AG04449 (cell line): ENCODE measurements at regions of chr3 and their contacts with region 1.

Region 1: DNA sequence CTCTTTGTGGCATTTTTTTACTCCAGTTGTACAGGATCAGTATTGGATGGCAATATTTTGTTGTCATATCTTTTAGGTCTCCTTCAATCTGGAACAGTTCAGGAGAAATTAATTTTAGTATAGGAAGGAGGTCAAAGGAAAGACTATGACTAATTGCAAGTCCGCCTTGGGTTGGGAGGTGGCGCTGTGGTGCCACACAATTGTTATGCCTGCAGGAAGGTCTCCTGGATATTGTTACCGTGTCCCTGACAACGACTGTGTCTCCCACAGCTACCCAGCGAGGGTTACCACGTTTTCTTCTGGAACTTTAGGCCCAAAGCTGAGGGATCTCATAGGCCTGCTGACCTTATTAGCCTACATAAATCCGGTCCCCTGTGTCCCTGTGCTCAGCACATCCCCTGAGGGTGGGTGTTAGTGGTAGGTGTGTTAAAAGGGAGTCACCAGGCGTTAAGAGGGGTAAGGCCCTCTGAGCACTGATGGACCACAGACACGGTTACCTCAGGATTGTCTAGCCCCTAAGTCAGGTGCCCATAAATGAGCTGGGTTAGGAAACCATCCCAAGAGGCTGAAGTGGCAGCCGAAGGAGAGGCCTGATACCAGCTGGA is 31.5 kb downstream of the KCNAB1 start:
- DNase-seq: peak; percentile 23
- H3K4me3 ChIP-seq: no peak overlapping the region
- CTCF ChIP-seq: peak; percentile 85

Region 2: DNA sequence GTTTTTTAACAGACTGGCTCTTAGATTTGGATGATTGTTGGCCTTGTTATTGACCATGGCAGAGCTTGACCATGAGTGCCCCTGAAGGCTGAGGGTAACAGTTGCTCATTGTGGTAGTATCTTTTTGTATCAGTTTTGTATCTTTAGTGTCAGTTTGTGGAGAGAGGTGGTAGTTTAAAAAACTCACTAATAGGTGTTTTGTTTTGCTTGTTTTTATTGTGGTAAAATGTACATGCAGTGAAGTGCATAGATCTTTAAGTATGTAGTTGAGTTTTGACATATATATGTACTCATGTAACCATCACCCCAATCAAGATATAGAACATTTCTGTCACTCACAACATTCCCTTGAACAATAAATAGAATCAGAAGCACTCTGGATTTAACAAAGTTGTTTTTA is 271.6 kb before region 1 on chr3:
- CTCF ChIA-PET with region 1: no interaction called
- POLR2A ChIA-PET with region 1: no interaction called
- DNase-seq: no peak
- H3K4me3 ChIP-seq: no peak overlapping the region
- CTCF ChIP-seq: no peak

Region 3: DNA sequence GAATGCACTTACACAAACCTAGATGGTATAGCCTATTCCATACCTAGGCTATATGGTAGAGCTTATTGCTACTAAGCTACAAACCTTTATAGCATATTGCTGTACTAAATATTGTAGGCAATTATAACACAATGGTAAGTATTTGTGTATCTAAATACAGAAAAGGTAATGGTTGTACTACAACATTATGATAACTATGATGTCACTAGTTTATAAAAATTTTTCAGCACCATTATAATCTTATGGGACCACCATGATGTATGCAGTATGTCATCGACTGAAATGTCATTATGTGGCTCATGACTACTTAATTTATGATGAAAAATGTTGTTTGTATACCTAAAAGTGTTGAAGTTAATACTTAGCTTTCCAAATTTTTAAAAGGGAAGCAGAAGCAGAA is 34.4 kb before region 1 on chr3:
- CTCF ChIA-PET with region 1: no interaction called
- POLR2A ChIA-PET with region 1: no interaction called
- DNase-seq: no peak
- H3K4me3 ChIP-seq: no peak overlapping the region
- CTCF ChIP-seq: no peak

Region 4: GRCh38 chr3:156132313-156132712 is 19.6 kb before region 1 on chr3:
- CTCF ChIA-PET with region 1: interaction called, 10 read pairs
- POLR2A ChIA-PET with region 1: no interaction called
- DNase-seq: no peak
- H3K4me3 ChIP-seq: no peak overlapping the region
- CTCF ChIP-seq: no peak

Region 5: GRCh38 chr3:156396851-156397250 is 244.9 kb after region 1 on chr3:
- CTCF ChIA-PET with region 1: no interaction called
- POLR2A ChIA-PET with region 1: no interaction called
- DNase-seq: peak; percentile 17
- H3K4me3 ChIP-seq: no peak overlapping the region
- CTCF ChIP-seq: no peak

Region 6: GRCh38 chr3:156449712-156450574 is 298.0 kb after region 1 on chr3:
- CTCF ChIA-PET with region 1: interaction called, 63 read pairs
- POLR2A ChIA-PET with region 1: no interaction called
- DNase-seq: no peak
- H3K4me3 ChIP-seq: no peak overlapping the region
- CTCF ChIP-seq: peak; percentile 60

Region 7: DNA sequence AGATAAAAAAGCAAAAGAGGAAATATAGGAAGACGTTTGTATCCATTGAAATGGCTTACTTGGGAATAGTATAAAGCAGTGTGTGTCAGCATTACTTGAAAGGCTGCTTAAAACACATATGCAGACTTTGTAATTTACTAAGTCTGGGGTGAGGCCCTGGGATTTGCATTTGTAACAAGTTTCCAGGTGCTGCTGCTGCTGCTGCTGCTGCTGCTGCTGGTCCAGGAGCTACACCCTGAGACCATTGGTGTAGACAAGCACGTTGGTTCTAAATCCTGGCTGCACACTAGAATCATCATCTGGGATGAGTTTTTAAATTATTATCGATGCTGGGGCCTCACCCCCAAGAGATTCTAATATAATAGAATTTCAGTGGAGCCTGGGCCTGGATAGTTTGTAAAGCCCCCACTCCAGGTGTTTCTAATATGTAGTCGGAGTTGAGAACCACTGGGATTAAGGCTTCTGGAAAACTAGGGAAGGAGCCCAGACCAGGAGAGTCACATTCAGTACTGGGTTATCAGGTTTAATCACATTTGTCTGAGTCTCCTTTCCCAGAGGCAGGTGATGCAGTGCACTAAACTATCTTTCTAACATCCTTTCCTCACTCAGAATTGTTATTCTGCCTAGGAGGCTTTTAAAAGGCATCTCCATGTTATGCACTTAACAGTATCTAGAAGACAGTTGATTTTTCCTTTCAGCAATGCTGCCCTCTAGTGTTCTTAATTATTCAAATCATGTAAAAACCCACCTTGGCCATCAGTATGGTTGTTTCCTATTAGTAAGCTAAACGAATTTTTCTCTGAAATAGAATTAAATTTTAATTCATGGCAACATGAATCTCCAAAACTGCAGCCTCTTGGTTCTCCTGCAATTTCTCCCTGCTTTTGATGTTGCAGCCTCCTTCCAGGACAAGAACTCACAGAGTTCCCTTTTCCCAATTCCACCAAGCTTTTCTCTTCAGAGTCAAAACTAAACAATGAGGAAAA is 357.6 kb after region 1 on chr3:
- CTCF ChIA-PET with region 1: interaction called, 471 read pairs
- POLR2A ChIA-PET with region 1: no interaction called
- DNase-seq: no peak
- H3K4me3 ChIP-seq: no peak overlapping the region
- CTCF ChIP-seq: peak; percentile 29

Region 8: DNA sequence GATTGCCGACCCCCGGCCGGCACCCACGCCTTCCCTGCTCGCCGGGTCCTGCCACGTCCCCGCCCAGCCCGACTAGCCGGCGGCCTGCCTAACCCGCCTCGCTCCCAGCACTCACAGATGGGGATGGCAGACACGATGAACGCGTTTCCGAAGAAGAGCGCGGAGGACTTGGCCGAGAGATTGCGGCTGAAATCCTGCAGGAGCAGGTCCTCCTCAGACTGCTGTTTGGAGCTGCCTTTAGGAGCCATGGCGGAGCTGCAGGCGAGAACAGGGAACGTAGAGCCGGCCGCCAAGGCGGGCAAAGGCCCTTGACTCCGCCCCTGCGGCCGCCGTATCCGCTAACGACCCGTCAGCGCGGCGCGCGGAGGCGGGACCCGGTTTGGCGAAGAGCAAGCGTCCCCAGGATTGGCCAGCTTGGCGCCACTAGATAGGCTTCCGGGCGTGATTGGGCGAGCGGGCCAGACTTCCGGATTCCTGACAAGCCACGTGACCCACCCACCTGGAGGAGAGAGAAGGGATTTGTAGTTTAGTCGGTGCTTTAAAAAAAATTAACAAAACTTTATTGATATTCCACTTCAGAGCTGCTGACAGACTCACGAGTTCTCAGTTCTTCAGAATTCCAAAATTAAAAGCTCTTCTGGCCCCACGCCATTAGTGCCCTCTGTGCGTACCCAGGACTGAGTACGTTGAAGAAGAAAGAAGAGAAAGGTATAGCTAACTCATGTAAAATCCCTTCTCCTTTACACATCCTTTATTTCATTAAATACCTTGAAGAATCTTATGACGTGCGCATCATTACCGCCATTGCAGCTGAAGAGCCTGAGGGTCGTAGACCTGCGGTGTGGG is 403.1 kb after region 1 on chr3 and contains the start of gene SSR3:
- CTCF ChIA-PET with region 1: interaction called, 121 read pairs
- POLR2A ChIA-PET with region 1: interaction called, 3 read pairs
- DNase-seq: peak; percentile 97
- H3K4me3 ChIP-seq: peak within 1 kb of the TSS; percentile 71
- CTCF ChIP-seq: no peak

Region 9: DNA sequence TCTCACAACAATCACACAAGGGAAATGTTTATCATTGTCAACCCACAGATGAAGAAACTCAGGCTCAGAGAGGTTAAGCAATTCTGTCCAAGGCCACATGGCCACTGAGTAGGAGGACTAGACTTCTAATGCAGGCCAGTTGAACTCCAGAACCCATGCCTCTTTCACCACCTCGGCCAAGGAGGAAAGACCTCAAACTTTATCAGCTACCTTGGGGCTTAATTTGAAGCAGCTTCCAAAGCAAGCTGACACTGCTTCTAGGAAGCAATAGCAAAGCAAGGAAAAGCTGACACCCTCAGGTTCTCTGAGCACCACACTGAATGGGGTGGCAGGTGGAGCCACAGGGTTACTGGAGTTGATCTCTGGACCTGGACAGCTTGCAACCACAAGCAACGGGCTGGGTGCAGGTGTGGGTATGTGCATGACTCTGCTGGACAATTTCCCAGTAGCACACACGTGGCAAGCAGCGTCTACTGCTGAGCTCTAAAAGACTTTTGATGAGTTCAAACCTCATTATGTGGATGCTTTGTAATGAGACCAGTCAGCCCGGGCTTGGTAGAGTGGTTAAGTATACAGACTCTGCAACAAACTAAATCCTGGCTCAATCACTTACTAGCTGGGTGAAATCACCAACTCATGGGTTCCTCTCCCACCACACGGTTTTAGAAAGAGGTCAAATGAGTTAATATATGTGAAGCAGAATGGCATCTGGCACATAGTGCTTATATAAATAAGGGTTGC is 984.9 kb after region 1 on chr3:
- CTCF ChIA-PET with region 1: interaction called, 102 read pairs
- POLR2A ChIA-PET with region 1: no interaction called
- DNase-seq: no peak
- H3K4me3 ChIP-seq: no peak overlapping the region
- CTCF ChIP-seq: no peak